ENCODE measurements at regions of chr3 and their contacts with region 1.

Region 1: GRCh38 chr3:46372492-46373359 is 2.0 kb downstream of the CCR5 start:
- DNase-seq: peak; percentile 24
- H3K4me3 Mint-ChIP-seq: no peak overlapping the region
- H3K27ac Mint-ChIP-seq: no peak overlapping the region
- H3K4me1 Mint-ChIP-seq: peaks cover 55% of the 10 kb centered on the region
- H3K27me3 Mint-ChIP-seq: peaks cover 51% of the 10 kb centered on the region

Region 2: DNA sequence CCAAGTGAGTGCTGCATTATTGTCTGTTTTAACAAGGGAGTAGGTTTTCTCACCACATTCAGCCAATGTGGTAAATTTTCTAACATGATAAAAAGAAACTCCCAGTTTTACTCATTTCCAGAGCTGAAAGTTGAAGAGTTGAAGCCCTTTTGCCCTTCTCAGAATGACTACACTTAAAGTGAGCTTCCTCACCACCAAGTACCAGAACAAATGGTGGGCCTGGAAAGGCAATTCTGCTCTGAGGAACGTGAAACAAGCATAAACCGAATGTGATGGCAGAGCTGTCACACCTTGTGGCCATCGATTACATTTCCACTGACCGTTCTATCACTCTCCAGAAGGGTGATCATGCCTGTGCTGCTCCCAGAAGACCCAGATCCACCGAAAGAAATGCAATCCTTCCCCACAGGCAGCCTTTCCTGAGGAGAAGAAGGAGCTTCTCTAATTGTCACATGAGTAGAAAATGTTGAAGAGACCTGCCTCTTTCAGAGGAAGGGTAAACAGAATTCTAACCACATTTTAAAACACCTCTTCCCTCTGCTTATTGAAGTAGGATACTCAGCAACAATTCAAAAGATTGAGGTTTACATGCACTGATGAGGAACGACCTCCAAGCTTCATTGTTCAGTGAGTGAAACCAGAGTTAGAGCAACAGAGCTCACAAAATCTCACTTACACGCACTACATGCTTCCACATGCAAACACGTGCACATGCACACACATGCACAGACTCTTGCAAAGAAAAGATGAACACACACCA is 507.8 kb before region 1 on chr3:
- intact Hi-C with region 1: loop called (anchors 5 kb)
- DNase-seq: peak; percentile 38
- H3K4me3 Mint-ChIP-seq: no peak overlapping the region
- H3K27ac Mint-ChIP-seq: peak overlapping the region; percentile 13
- H3K4me1 Mint-ChIP-seq: peaks cover 56% of the 10 kb centered on the region
- H3K27me3 Mint-ChIP-seq: peaks cover 65% of the 10 kb centered on the region

Region 3: DNA sequence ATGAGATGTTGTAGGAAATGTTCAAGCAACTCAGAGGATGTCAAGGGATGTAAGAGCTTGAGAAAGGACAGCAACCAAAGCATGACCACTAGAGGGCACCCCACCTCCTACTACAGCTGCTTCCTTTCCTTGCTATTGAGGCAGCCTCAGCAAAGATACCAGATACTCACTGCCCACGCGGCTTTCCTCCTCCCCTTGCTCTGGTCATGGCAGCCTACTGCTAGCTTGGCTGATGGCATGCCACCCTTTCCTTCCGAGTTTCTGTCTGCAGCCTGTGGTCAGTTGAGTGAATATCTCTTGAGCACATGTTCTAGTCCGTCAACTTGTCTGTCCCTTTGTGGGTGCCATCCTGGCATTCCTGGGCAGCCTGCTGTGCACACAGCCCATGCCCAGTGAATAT is 433.9 kb before region 1 on chr3:
- intact Hi-C with region 1: loop called (anchors 5 kb)
- DNase-seq: peak; percentile 75
- H3K4me3 Mint-ChIP-seq: no peak overlapping the region
- H3K27ac Mint-ChIP-seq: no peak overlapping the region
- H3K4me1 Mint-ChIP-seq: peaks cover 44% of the 10 kb centered on the region
- H3K27me3 Mint-ChIP-seq: no peaks in the 10 kb centered on the region

Region 4: DNA sequence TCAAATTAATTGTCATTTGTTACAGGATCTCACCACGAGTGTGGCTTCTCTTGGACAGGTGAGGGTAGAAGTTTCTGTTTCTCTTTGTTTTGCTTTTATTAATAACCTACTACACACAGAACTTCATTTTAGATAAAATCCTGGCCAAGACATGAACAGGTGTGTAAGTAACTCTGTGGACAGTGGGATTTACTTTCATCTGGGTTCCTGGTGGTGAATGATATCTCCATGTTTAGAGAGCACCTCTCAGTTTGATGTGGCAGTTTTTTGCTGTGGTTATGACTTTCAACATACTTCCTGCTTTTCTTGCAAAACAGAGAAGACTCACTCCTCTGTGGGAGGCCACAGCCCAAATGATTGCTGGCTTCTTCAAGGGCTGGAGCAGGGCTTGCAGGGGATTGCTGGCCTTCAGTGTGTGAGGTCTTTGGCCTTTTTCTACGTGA is 274.4 kb before region 1 on chr3:
- intact Hi-C with region 1: loop called (anchors 1 kb)
- DNase-seq: peak; percentile 60
- H3K4me3 Mint-ChIP-seq: peak overlapping the region; percentile 55
- H3K27ac Mint-ChIP-seq: peak overlapping the region; percentile 91
- H3K4me1 Mint-ChIP-seq: peaks cover 43% of the 10 kb centered on the region
- H3K27me3 Mint-ChIP-seq: peaks cover 27% of the 10 kb centered on the region

Region 5: DNA sequence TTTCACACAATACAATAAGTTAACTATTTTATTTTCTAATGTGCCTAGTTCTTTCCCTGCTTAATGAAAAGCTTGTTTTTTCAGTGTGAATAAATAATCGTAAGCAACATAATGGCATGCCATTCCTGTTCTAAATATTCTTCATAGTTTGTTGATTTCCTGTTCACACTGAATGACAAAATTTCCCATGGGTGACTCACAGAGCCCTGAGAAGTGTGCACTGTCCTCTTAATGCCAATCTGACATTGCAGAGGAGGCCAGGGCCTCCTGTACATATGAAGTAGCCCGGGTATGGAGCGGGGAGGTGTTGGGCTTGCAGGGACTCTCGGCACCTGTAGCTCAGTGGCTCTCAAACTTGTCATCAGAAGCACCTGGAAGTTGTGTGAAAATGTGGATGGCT is 106.1 kb before region 1 on chr3:
- intact Hi-C with region 1: loop called (anchors 1 kb)
- DNase-seq: no peak
- H3K4me3 Mint-ChIP-seq: no peak overlapping the region
- H3K27ac Mint-ChIP-seq: no peak overlapping the region
- H3K4me1 Mint-ChIP-seq: peaks cover 23% of the 10 kb centered on the region
- H3K27me3 Mint-ChIP-seq: peaks cover 66% of the 10 kb centered on the region

Region 6: GRCh38 chr3:46349485-46350261 is 23.1 kb before region 1 on chr3:
- intact Hi-C with region 1: loop called (anchors 1 kb)
- DNase-seq: no peak
- H3K4me3 Mint-ChIP-seq: peak overlapping the region; percentile 43
- H3K27ac Mint-ChIP-seq: peak overlapping the region; percentile 71
- H3K4me1 Mint-ChIP-seq: peaks cover 62% of the 10 kb centered on the region
- H3K27me3 Mint-ChIP-seq: peaks cover 39% of the 10 kb centered on the region

Region 7: GRCh38 chr3:46395210-46395731 is 22.5 kb after region 1 on chr3:
- intact Hi-C with region 1: no loop called
- DNase-seq: no peak
- H3K4me3 Mint-ChIP-seq: no peak overlapping the region
- H3K27ac Mint-ChIP-seq: no peak overlapping the region
- H3K4me1 Mint-ChIP-seq: peaks cover 3% of the 10 kb centered on the region
- H3K27me3 Mint-ChIP-seq: peaks cover 29% of the 10 kb centered on the region